HCT116 (cell line): ENCODE measurements at regions of chr15 and their contacts with region 1.

Region 1: DNA sequence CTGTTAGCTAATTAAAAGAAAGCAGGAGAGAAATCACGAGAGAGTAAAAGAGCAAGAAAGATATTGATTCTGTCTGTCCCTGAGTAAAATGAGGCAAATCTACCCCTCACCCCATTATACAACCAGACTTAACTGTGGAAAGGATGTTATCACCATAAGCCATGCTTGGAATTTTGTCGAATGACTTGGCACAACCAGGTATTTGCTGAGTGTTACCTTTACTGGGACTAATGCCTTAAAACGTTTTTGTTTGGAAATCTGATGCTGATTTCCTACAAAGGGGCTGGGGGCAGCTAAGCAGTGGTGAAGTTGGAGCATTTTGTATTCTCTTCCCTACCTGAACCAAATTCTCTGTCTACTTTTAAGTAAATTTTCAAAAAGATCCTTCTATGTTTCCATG is 211.1 kb downstream of the GREM1 start:
- DNase-seq: no peak
- ATAC-seq: no peak
- H3K4me3 ChIP-seq: no peak overlapping the region
- H3K27ac ChIP-seq: no peak overlapping the region
- H3K4me1 ChIP-seq: no peaks in the 10 kb centered on the region
- H3K27me3 ChIP-seq: no peaks in the 10 kb centered on the region
- CTCF ChIP-seq: no peak
- POLR2A ChIP-seq: no peak
- RAD21 ChIP-seq: no peak

Region 2: GRCh38 chr15:33226559-33227181 is 297.8 kb after region 1 on chr15:
- CTCF ChIA-PET with region 1: no interaction called
- POLR2A ChIA-PET with region 1: no interaction called
- RAD21 ChIA-PET with region 1: interaction called in 1 of 2 experiments, 10 read pairs
- intact Hi-C with region 1: no loop called
- DNase-seq: peak; percentile 70
- ATAC-seq: peak; percentile 96
- H3K4me3 ChIP-seq: no peak overlapping the region
- H3K27ac ChIP-seq: no peak overlapping the region
- H3K4me1 ChIP-seq: no peaks in the 10 kb centered on the region
- H3K27me3 ChIP-seq: no peaks in the 10 kb centered on the region
- CTCF ChIP-seq: peak; percentile 12 to 69 (median 58); a peak in 4 of 6 replicates
- POLR2A ChIP-seq: no peak
- RAD21 ChIP-seq: peak; percentile 27; the same call in 1 of the 2 replicates